Panc1 (cell line): ENCODE measurements at regions of chr21 and their contacts with region 1.

Region 1: DNA sequence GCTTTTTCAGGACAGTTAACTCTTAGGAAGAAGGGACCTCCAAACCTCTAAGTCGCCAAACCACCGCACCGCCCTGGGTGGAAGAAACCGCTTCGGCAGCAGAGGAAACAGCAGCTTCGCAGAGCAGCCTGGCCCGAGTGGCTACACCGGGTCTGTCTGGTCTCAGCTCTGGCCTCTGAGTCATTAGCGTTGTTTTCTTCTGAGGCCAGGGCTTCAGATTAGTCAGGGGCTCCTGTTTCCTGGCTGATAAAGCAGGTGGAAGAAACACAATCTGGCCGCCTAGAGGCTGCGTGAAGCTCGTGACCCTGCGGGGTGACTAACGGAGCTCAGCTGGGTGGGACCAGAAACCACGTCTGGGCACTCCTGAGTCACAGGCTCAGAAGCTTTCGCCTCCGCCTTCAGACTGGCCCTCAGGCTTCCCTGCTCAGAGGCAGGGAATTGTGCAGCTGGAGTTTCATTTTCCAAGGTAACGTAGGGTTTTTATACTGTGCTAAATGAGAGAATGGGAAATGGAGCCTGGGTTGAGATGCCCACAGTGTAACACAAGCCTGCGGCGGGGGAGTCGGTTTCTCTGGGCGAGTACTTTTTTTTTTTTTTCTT is 44.9 kb downstream of the CHAF1B start:
- DNase-seq: peak; percentile 96
- ATAC-seq: peak; percentile 92
- H3K4me3 ChIP-seq: peak overlapping the region; percentile 33 to 54
- H3K27ac ChIP-seq: peak overlapping the region; percentile 93
- H3K4me1 ChIP-seq: peaks cover 16% of the 10 kb centered on the region
- H3K27me3 ChIP-seq: no peaks in the 10 kb centered on the region
- CTCF ChIP-seq: no peak

Region 2: GRCh38 chr21:36504067-36505058 is 74.3 kb after region 1 on chr21:
- CTCF ChIA-PET with region 1: no interaction called
- POLR2A ChIA-PET with region 1: no interaction called
- in situ Hi-C with region 1: no loop called
- intact Hi-C with region 1: loop called (anchors 10 kb)
- DNase-seq: peak; percentile 18
- ATAC-seq: no peak
- H3K4me3 ChIP-seq: no peak overlapping the region
- H3K27ac ChIP-seq: no peak overlapping the region
- H3K4me1 ChIP-seq: no peaks in the 10 kb centered on the region
- H3K27me3 ChIP-seq: no peaks in the 10 kb centered on the region
- CTCF ChIP-seq: peak; percentile 76

Region 3: DNA sequence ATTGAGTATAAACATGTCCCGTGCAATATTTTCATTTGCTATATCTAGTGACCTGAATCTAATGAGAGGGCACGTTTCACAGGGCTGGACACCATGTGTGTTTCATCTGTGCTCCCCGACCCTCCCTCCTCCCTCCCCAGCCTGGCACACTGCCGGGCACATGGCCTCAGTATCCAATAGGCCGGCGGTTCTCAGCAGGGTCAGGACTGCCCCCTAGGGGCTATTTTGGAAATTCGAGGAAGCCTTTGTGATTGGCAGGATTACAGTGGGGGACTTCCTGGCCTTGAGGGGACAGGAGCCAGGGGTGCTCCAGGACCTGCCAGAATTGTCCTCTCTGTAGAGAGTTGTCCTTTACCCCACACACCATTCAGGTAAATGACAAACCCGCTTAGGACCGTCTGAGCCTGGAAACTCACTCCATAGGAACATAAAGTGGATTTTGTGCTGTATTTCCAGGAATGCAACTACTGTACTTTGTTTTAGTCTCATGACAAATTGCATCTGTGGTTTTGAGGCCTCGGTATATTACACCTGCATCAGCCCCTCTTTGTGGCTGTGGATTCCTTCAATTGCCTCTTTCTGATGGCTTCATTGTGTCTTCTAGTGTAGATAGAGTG is 159.4 kb after region 1 on chr21:
- CTCF ChIA-PET with region 1: no interaction called
- POLR2A ChIA-PET with region 1: no interaction called
- in situ Hi-C with region 1: no loop called
- intact Hi-C with region 1: loop called (anchors 10 kb)
- DNase-seq: no peak
- ATAC-seq: peak; percentile 80
- H3K4me3 ChIP-seq: no peak overlapping the region
- H3K27ac ChIP-seq: no peak overlapping the region
- H3K4me1 ChIP-seq: no peaks in the 10 kb centered on the region
- H3K27me3 ChIP-seq: no peaks in the 10 kb centered on the region; the same call in 1 of the 2 replicates
- CTCF ChIP-seq: peak; percentile 81

Region 4: DNA sequence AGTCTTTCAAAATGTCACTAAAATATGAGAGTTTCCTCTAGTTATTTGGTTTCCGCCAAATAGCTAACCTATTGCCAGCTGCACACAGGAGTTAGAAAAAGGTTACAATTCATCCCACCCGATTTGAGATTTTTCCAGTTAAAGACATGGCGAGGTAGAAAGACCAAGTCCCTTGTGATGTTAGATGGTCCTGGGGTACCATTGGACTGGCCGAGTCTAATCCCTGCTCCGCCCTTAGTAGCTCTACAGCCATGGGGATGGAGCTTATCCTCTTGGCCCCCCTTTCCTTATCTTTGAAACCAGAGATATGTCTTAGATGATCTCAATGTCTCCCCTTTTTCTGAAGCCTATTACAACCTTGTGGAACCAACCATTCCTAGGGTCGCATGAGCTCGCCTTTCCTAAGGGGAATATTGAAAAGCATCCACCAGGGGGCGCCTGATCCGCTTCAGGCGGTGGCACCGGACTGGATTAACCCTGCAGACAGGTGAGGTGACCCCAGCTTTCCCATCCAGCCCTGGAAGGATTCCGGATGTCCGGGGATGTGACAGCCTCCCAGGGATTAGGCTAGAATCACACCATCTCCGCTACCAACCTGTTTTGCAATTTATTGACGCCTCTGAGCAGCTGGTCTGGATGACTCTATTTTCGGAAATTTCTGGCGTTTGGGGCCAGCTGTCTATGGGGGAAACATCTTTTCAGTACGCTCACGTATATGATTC is 200.6 kb after region 1 on chr21:
- CTCF ChIA-PET with region 1: no interaction called
- POLR2A ChIA-PET with region 1: no interaction called
- in situ Hi-C with region 1: no loop called
- intact Hi-C with region 1: no loop called
- DNase-seq: peak; percentile 20
- ATAC-seq: peak; percentile 76; the same call in 1 of the 2 replicates
- H3K4me3 ChIP-seq: no peak overlapping the region
- H3K27ac ChIP-seq: no peak overlapping the region
- H3K4me1 ChIP-seq: no peaks in the 10 kb centered on the region
- H3K27me3 ChIP-seq: no peaks in the 10 kb centered on the region
- CTCF ChIP-seq: peak; percentile 84